B cell (primary cell): ENCODE measurements at regions of chr11 and their contacts with region 1.

Region 1: DNA sequence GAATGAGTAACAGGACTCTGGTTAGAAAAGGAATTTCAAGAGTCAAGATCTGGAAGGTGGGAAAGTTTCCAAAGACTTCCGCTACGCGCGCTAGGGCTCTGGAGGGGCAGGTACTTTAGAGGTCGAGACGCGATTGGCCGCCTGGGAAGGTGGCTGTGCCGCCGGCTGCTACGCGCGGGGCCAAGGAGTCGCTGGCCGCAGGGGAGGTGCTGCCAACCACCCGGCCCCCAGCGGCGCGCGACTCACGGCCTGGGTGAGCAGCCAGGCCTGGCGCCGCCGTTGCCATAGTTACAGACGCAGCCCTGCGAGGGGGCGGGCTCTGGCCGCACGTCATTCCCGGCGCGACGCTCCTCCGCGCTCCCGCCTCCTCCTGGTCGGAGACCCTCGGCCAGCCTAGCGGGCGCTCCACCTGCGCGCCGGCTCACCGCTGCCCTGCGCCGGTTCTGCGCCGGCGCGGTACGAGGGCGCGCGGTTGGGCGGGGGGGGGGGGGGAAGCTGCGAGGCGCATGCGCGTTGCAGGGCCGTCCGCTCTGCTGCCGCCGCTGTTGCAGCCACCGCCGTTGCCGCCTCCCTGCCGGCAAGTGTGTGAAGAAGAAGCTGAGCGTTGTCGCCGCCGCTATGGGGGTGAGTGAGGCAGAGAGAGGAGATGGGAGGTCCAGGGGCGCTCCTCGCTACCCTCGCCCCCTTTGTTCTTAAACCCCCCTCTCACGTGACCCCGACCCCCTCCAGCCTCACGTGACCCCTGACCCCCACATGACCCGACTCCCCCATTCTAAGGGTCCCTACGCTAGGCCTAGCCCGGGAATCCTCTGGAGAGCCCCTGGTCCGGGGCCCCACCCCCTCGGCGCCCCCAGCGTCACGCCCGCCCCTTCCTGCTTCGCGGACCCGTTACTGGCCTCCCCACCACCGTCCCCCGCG is at the start of gene NAA40:
- DNase-seq: peak; percentile 98
- ATAC-seq: peak; percentile 87
- H3K4me3 ChIP-seq: peak within 1 kb of the TSS; percentile 65 to 98 (median 72)
- H3K4me3 Mint-ChIP-seq: peak within 1 kb of the TSS; percentile 88
- H3K27ac ChIP-seq: peak within 1 kb of the TSS; percentile 55 to 72
- H3K27ac Mint-ChIP-seq: peak within 1 kb of the TSS; percentile 82
- H3K4me1 ChIP-seq: peaks cover 27 to 35% of the 10 kb centered on the region in 2 donors
- H3K4me1 Mint-ChIP-seq: peaks cover 32% of the 10 kb centered on the region
- H3K27me3 ChIP-seq: no peaks in the 10 kb centered on the region
- H3K27me3 Mint-ChIP-seq: no peaks in the 10 kb centered on the region
- CTCF ChIP-seq: no peak
- total RNA-seq, gene NAA40: 41.3 and 52.1 TPM in 2 replicates

Region 2: GRCh38 chr11:63768237-63769043 is 170.3 kb before region 1 on chr11 and contains the start of gene ZFTA:
- CTCF ChIA-PET with region 1: interaction called, 29 read pairs
- POLR2A ChIA-PET with region 1: no interaction called
- intact Hi-C with region 1: loop called (anchors 2 kb)
- DNase-seq: peak; percentile 80
- ATAC-seq: peak; percentile 68
- H3K4me3 ChIP-seq: peak within 1 kb of the TSS; percentile 18 to 89 (median 67)
- H3K4me3 Mint-ChIP-seq: peak within 1 kb of the TSS; percentile 89
- H3K27ac ChIP-seq: peak within 1 kb of the TSS in 1 of 2 donors; percentile 44
- H3K27ac Mint-ChIP-seq: peak within 1 kb of the TSS; percentile 78
- H3K4me1 ChIP-seq: peaks cover 14 to 21% of the 10 kb centered on the region in 2 donors
- H3K4me1 Mint-ChIP-seq: peaks cover 13% of the 10 kb centered on the region
- H3K27me3 ChIP-seq: peaks cover 0 to 17% (median 2%) of the 10 kb centered on the region in 4 experiments
- H3K27me3 Mint-ChIP-seq: peaks cover 10% of the 10 kb centered on the region
- CTCF ChIP-seq: peak; percentile 67
- total RNA-seq, gene ZFTA: 11.8 and 13.3 TPM in 2 replicates

Region 3: GRCh38 chr11:63916837-63917691 is 21.7 kb before region 1 on chr11 and contains the start of gene RCOR2:
- CTCF ChIA-PET with region 1: interaction called, 10 read pairs
- POLR2A ChIA-PET with region 1: interaction called, 8 read pairs
- intact Hi-C with region 1: loop called (anchors 1 kb)
- DNase-seq: peak; percentile 77
- ATAC-seq: peak; percentile 71
- H3K4me3 ChIP-seq: peak within 1 kb of the TSS in 4 of 5 experiments; percentile 35 to 58 (median 51)
- H3K4me3 Mint-ChIP-seq: peak within 1 kb of the TSS; percentile 85
- H3K27ac ChIP-seq: no peak within 1 kb of the TSS
- H3K27ac Mint-ChIP-seq: peak within 1 kb of the TSS; percentile 65
- H3K4me1 ChIP-seq: peaks cover 33% of the 10 kb centered on the region in 2 donors
- H3K4me1 Mint-ChIP-seq: peaks cover 23% of the 10 kb centered on the region
- H3K27me3 ChIP-seq: peaks cover 0 to 28% (median 9%) of the 10 kb centered on the region in 4 experiments
- H3K27me3 Mint-ChIP-seq: peaks cover 6% of the 10 kb centered on the region
- CTCF ChIP-seq: no peak
- total RNA-seq, gene RCOR2: not detected in 2 replicates

Region 4: DNA sequence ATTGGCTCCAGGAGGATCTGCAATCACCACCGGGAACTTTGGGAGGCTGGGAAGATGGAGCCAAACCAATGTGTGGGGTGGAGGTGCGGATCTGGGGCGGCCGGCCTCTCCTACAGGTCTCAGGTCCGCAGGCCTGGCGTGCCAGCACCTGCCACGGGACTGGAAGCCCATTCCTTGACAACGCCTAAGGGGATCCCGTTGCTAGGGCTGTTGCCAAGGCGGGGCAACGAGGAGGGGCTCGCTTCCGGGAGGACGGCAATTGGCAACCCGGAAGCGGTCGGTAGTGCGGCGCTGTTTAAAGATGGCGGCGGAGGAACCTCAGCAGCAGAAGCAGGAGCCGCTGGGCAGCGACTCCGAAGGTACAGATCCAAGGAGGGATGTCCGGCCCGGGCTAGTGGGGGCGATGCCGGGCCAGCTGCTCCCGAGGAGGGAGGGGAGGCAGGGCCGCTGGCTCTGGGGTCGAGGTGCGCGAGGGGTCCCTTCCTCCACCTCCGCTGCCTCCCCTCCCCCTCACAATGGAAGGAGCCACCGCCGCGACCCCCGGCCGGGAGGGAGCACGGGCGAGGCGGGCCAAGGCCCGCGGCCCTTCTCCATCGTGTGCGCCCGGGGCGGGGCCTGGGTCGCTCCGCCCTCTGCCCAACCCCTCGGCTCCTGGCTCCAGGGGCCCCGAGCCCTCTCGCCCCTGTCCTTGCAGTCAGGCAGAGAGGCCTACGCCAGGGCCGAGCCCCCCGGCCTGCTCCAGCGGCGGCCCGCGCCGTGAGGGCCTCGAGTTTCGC is 47.6 kb after region 1 on chr11 and contains the start of gene OTUB1:
- CTCF ChIA-PET with region 1: no interaction called
- POLR2A ChIA-PET with region 1: no interaction called
- intact Hi-C with region 1: loop called (anchors 1 kb)
- DNase-seq: peak; percentile 89
- ATAC-seq: peak; percentile 84
- H3K4me3 ChIP-seq: peak within 1 kb of the TSS; percentile 76 to 96 (median 93)
- H3K4me3 Mint-ChIP-seq: peak within 1 kb of the TSS; percentile 99
- H3K27ac ChIP-seq: peak within 1 kb of the TSS; percentile 76 to 94
- H3K27ac Mint-ChIP-seq: peak within 1 kb of the TSS; percentile 97
- H3K4me1 ChIP-seq: peaks cover 22 to 39% of the 10 kb centered on the region in 2 donors
- H3K4me1 Mint-ChIP-seq: peaks cover 42% of the 10 kb centered on the region
- H3K27me3 ChIP-seq: no peaks in the 10 kb centered on the region
- H3K27me3 Mint-ChIP-seq: no peaks in the 10 kb centered on the region
- CTCF ChIP-seq: no peak
- total RNA-seq, gene OTUB1: 71.0 and 78.2 TPM in 2 replicates

Region 5: DNA sequence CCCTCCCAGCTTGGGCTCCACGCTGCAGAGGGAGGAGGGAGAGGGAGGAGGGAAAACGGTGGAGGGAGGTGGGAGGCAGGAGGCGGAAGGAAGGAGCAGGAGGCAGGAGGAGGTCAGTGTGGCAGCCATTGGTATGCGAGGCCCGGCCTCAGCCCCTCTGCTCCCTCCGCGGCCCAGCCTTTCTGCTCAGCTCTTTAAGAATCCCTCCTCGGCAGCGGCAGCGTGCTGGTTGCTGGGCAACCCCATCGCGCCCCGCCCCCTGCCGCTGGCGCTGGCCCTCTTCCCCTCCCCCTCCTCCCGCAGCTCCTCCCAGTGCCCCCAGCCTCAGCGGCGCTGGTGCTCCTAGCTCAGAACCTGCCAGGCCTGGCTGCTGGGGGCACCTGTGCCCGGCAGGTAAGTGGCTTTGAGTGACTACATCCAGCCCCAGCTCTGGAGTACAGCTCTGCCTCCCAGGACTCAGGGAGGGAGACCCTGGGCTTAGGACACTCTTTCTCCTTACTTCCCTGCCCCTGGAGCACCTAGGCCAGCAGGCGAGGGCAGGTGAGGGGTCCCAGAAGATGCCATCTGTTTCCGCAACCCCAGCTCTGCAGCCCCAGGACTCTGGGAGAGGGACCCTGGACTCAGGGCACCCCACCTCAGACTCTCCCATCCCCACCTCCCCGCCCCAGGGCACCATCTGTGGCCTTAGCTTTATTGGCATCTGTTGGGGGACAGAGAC is 89.8 kb after region 1 on chr11:
- CTCF ChIA-PET with region 1: no interaction called
- POLR2A ChIA-PET with region 1: no interaction called
- intact Hi-C with region 1: no loop called
- DNase-seq: no peak
- ATAC-seq: no peak
- H3K4me3 ChIP-seq: no peak overlapping the region
- H3K4me3 Mint-ChIP-seq: no peak overlapping the region
- H3K27ac ChIP-seq: no peak overlapping the region
- H3K27ac Mint-ChIP-seq: no peak overlapping the region
- H3K4me1 ChIP-seq: peaks cover 0 to 10% of the 10 kb centered on the region in 2 donors
- H3K4me1 Mint-ChIP-seq: no peaks in the 10 kb centered on the region
- H3K27me3 ChIP-seq: peaks cover 0 to 19% (median 3%) of the 10 kb centered on the region in 4 experiments
- H3K27me3 Mint-ChIP-seq: peaks cover 36% of the 10 kb centered on the region
- CTCF ChIP-seq: no peak